Caco-2 (cell line): ENCODE measurements at regions of chr4 and their contacts with region 1.

Region 1: DNA sequence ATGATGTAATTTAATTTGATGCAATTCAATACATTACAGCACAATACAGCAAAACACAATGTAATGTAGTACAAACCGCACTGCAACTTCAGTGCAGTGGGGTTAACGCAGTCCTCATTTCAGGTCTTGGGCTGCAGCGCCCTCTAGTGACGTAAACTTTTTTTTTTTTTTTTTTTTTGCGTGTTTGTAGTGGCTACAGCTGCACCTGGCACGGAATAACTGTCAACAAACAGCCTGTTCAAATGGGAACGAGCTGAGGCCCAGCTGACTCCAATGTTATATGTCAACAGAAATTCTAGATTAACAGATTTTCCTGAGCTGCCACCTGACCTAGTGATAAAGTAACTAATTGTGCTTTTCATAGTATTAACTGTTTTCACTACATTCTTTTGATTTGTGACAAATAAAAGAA is 33.5 kb upstream of the RASSF6 start:
- DNase-seq: peak in 1 of 2 experiments; percentile 28
- H3K4me3 ChIP-seq: no peak overlapping the region
- H3K4me3 Mint-ChIP-seq: no peak overlapping the region
- H3K27ac Mint-ChIP-seq: no peak overlapping the region
- H3K4me1 ChIP-seq: no peaks in the 10 kb centered on the region
- H3K4me1 Mint-ChIP-seq: no peaks in the 10 kb centered on the region
- H3K27me3 ChIP-seq: no peaks in the 10 kb centered on the region
- H3K27me3 Mint-ChIP-seq: no peaks in the 10 kb centered on the region
- CTCF ChIP-seq: peak; percentile 46 to 63

Region 2: GRCh38 chr4:73142995-73143547 is 510.6 kb before region 1 on chr4:
- CTCF ChIA-PET with region 1: no interaction called
- POLR2A ChIA-PET with region 1: no interaction called
- intact Hi-C with region 1: no loop called
- DNase-seq: no peak
- H3K4me3 ChIP-seq: no peak overlapping the region
- H3K4me3 Mint-ChIP-seq: no peak overlapping the region
- H3K27ac Mint-ChIP-seq: no peak overlapping the region
- H3K4me1 ChIP-seq: no peaks in the 10 kb centered on the region
- H3K4me1 Mint-ChIP-seq: no peaks in the 10 kb centered on the region
- H3K27me3 ChIP-seq: no peaks in the 10 kb centered on the region
- H3K27me3 Mint-ChIP-seq: no peaks in the 10 kb centered on the region
- CTCF ChIP-seq: peak in 1 of 2 experiments; percentile 21

Region 3: GRCh38 chr4:73446336-73446938 is 207.3 kb before region 1 on chr4:
- CTCF ChIA-PET with region 1: interaction called, 4 read pairs
- POLR2A ChIA-PET with region 1: no interaction called
- intact Hi-C with region 1: loop called (anchors 5 kb)
- DNase-seq: peak; percentile 36 to 45
- H3K4me3 ChIP-seq: no peak overlapping the region
- H3K4me3 Mint-ChIP-seq: no peak overlapping the region
- H3K27ac Mint-ChIP-seq: no peak overlapping the region
- H3K4me1 ChIP-seq: peaks cover 21% of the 10 kb centered on the region
- H3K4me1 Mint-ChIP-seq: no peaks in the 10 kb centered on the region
- H3K27me3 ChIP-seq: no peaks in the 10 kb centered on the region
- H3K27me3 Mint-ChIP-seq: no peaks in the 10 kb centered on the region
- CTCF ChIP-seq: peak; percentile 76 to 81

Region 4: DNA sequence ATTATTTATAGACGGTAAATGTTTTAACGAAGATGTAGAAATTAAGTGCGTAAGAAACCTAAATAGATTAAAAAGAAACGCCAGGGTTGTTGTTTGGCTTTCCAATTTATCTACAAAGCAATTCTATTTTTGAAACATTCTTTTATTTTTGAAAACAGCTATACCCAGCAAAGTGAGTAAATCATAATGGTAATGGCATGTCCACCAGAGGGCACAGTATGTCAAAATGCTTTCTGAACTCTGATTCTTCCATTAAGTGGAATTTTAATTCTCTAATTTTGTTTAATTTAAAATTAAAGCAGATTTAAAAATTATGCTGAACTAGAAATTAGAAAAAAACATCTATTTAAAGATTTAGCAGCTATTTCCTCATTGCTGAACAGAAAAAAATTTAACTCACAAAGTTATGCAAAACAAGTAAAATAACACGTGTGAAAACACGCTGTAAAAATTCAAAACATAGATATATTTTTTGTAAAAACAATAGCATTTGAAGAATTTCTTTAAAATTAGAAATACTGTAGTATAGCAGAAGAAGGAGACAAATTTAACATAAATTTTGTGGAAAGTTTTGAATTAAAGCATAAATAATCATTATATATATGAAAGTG is 60.0 kb before region 1 on chr4:
- CTCF ChIA-PET with region 1: interaction called, 6 read pairs
- POLR2A ChIA-PET with region 1: no interaction called
- intact Hi-C with region 1: loop called (anchors 1 kb)
- DNase-seq: peak in 1 of 2 experiments; percentile 26
- H3K4me3 ChIP-seq: no peak overlapping the region
- H3K4me3 Mint-ChIP-seq: no peak overlapping the region
- H3K27ac Mint-ChIP-seq: no peak overlapping the region
- H3K4me1 ChIP-seq: peaks cover 7% of the 10 kb centered on the region
- H3K4me1 Mint-ChIP-seq: peaks cover 1% of the 10 kb centered on the region
- H3K27me3 ChIP-seq: no peaks in the 10 kb centered on the region
- H3K27me3 Mint-ChIP-seq: no peaks in the 10 kb centered on the region
- CTCF ChIP-seq: peak; percentile 58 to 69